Psoas muscle (tissue), 8 donors: ENCODE measurements at regions of chr2 and their contacts with region 1.

Region 1: GRCh38 chr2:181715033-181715630 is 34.8 kb upstream of the NEUROD1 start:
- DNase-seq: peak in 1 of 2 donors; percentile 50
- ATAC-seq: peak in 2 of 4 donors; percentile 44 to 64
- H3K4me3 ChIP-seq: no peak overlapping the region
- H3K27ac ChIP-seq: no peak overlapping the region
- H3K4me1 ChIP-seq: no peaks in the 10 kb centered on the region
- H3K27me3 ChIP-seq: no peaks in the 10 kb centered on the region
- CTCF ChIP-seq: peak; percentile 62

Region 2: GRCh38 chr2:180125245-180125962 is 1589.7 kb before region 1 on chr2:
- intact Hi-C with region 1: loop called (anchors 5 to 10 kb)
- DNase-seq: peak; percentile 36 to 67
- ATAC-seq: peak; percentile 87 to 96 (median 90)
- H3K4me3 ChIP-seq: no peak overlapping the region
- H3K27ac ChIP-seq: no peak overlapping the region
- H3K4me1 ChIP-seq: no peaks in the 10 kb centered on the region
- H3K27me3 ChIP-seq: no peaks in the 10 kb centered on the region
- CTCF ChIP-seq: peak; percentile 52

Region 3: GRCh38 chr2:181077128-181077709 is 637.9 kb before region 1 on chr2:
- intact Hi-C with region 1: loop called in 1 of 2 experiments (anchors 10 kb)
- DNase-seq: no peak
- ATAC-seq: peak in 2 of 4 donors; percentile 75 to 82
- H3K4me3 ChIP-seq: no peak overlapping the region
- H3K27ac ChIP-seq: no peak overlapping the region
- H3K4me1 ChIP-seq: peaks cover 7% of the 10 kb centered on the region
- H3K27me3 ChIP-seq: no peaks in the 10 kb centered on the region
- CTCF ChIP-seq: peak; percentile 65

Region 4: GRCh38 chr2:181104512-181105115 is 610.5 kb before region 1 on chr2:
- intact Hi-C with region 1: loop called in 1 of 2 experiments (anchors 10 kb)
- DNase-seq: no peak
- ATAC-seq: no peak
- H3K4me3 ChIP-seq: no peak overlapping the region
- H3K27ac ChIP-seq: no peak overlapping the region
- H3K4me1 ChIP-seq: no peaks in the 10 kb centered on the region
- H3K27me3 ChIP-seq: no peaks in the 10 kb centered on the region
- CTCF ChIP-seq: peak; percentile 60

Region 5: DNA sequence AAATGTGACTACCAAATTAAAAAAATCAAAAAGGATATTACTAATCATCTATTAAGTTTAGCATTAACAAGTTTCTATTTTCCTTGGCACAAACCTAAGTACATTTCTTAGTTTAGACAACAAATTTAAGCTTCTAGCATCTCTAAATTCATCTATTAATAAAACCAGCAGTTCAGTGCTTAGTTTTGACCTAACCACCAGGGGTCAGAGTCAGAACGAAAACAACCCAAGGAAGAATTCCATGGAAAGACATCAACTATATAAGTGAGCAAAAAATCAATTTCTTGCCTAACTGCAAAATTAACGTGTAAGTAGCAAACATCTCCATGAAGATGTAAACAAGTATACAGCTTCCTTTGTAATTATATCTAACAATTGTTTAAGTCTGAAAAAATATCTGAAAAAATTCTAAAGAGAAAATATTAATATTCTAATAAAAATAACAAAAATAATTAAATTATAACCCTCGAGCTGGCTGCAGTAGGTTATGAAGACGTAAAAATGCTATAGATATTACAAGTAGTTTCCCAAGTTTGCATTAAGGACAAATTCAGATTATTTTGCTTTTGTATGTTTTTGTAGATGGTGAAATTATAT is 141.9 kb before region 1 on chr2:
- intact Hi-C with region 1: loop called in 1 of 2 experiments (anchors 10 kb)
- DNase-seq: no peak
- ATAC-seq: no peak
- H3K4me3 ChIP-seq: no peak overlapping the region
- H3K27ac ChIP-seq: no peak overlapping the region
- H3K4me1 ChIP-seq: no peaks in the 10 kb centered on the region
- H3K27me3 ChIP-seq: peaks cover 0 to 2% (median 0%) of the 10 kb centered on the region in 3 donors
- CTCF ChIP-seq: peak; percentile 14

Region 6: GRCh38 chr2:181586569-181587081 is 128.5 kb before region 1 on chr2:
- intact Hi-C with region 1: no loop called
- DNase-seq: no peak
- ATAC-seq: no peak
- H3K4me3 ChIP-seq: no peak overlapping the region
- H3K27ac ChIP-seq: no peak overlapping the region
- H3K4me1 ChIP-seq: no peaks in the 10 kb centered on the region
- H3K27me3 ChIP-seq: peaks cover 0 to 3% (median 3%) of the 10 kb centered on the region in 3 donors
- CTCF ChIP-seq: no peak

Region 7: GRCh38 chr2:181672255-181673008 is 42.7 kb before region 1 on chr2:
- intact Hi-C with region 1: no loop called
- DNase-seq: no peak
- ATAC-seq: no peak
- H3K4me3 ChIP-seq: no peak overlapping the region
- H3K27ac ChIP-seq: no peak overlapping the region
- H3K4me1 ChIP-seq: no peaks in the 10 kb centered on the region
- H3K27me3 ChIP-seq: peaks cover 0 to 8% (median 0%) of the 10 kb centered on the region in 3 donors
- CTCF ChIP-seq: no peak

Region 8: GRCh38 chr2:182014284-182014683 is 299.2 kb after region 1 on chr2:
- intact Hi-C with region 1: no loop called
- DNase-seq: no peak
- ATAC-seq: peak in 1 of 4 donors; percentile 37
- H3K4me3 ChIP-seq: no peak overlapping the region
- H3K27ac ChIP-seq: no peak overlapping the region
- H3K4me1 ChIP-seq: no peaks in the 10 kb centered on the region
- H3K27me3 ChIP-seq: no peaks in the 10 kb centered on the region
- CTCF ChIP-seq: no peak